ENCODE measurements at regions of chr22 and their contacts with region 1.

Region 1: GRCh38 chr22:49815641-49816071 is 12.0 kb downstream of the BRD1 start:
- DNase-seq: peak; percentile 73 to 86
- H3K4me3 ChIP-seq: no peak overlapping the region
- H3K27ac ChIP-seq: no peak overlapping the region
- H3K4me1 ChIP-seq: peaks cover 3% of the 10 kb centered on the region; the same call in 1 of the 2 replicates
- H3K27me3 ChIP-seq: no peaks in the 10 kb centered on the region
- CTCF ChIP-seq: no peak

Region 2: DNA sequence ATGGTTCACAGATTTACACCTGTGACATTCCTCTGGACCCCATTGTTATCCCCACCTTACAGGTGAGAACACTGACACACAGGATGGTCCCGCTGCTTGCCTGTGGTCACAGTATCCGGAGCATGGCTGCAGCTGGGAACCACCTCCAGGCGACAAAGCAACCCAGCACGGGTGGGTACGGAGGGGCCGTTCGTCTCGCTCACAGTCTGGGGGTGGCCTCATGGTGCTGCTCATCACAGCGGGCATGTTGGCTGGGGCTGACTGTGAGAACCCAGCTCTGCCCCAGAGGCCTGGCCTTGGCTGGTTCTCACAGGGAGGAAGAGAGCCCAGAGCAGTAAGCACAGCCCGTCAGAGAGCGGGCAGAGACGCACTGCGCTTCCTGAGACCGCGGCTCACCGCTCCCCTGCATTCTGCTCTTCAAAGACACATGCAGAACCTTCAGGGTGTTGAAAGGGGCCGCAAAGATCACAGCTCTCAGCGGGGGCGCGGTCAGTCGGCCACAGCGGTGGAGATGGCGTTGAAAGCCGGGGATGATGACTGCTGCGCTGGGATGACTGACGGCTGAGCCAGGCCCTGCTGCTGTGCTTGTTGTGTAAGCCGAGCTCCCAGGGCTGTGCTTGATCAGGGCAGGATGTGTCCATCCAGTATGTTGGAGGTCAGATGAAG is 410.9 kb before region 1 on chr22:
- CTCF ChIA-PET with region 1: no interaction called
- POLR2A ChIA-PET with region 1: no interaction called
- intact Hi-C with region 1: no loop called
- DNase-seq: no peak
- H3K4me3 ChIP-seq: no peak overlapping the region
- H3K27ac ChIP-seq: no peak overlapping the region
- H3K4me1 ChIP-seq: no peaks in the 10 kb centered on the region
- H3K27me3 ChIP-seq: peaks cover 100% of the 10 kb centered on the region
- CTCF ChIP-seq: no peak

Region 3: DNA sequence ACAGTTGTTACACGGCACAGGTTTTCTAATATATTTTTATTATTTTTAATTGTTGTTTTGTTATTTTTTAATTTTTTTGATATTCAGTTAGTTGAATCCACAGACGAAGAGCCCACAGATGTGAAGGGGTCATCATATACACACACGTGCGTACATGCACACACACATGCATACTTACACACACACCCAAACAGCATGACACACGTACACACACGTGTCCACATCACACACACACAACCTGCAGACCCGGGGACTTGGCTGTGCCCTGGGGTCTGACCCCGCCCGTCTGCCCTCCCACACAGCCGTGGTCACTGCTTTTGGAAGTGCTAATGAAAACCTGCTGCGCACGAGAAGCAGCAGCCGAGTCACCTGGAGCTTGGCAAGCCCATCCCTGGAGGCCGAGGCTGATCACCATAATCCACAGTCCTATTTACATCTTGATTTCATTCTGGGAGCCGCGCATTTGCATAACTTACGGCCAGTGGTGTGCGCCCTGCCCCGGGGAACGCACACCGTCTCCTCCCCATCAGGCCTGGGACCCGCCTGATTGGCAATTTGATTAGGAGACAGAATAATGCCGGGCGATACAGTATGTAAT is 98.2 kb before region 1 on chr22:
- CTCF ChIA-PET with region 1: no interaction called
- POLR2A ChIA-PET with region 1: no interaction called
- intact Hi-C with region 1: no loop called
- DNase-seq: no peak
- H3K4me3 ChIP-seq: no peak overlapping the region
- H3K27ac ChIP-seq: no peak overlapping the region
- H3K4me1 ChIP-seq: no peaks in the 10 kb centered on the region
- H3K27me3 ChIP-seq: peaks cover 100% of the 10 kb centered on the region
- CTCF ChIP-seq: no peak

Region 4: DNA sequence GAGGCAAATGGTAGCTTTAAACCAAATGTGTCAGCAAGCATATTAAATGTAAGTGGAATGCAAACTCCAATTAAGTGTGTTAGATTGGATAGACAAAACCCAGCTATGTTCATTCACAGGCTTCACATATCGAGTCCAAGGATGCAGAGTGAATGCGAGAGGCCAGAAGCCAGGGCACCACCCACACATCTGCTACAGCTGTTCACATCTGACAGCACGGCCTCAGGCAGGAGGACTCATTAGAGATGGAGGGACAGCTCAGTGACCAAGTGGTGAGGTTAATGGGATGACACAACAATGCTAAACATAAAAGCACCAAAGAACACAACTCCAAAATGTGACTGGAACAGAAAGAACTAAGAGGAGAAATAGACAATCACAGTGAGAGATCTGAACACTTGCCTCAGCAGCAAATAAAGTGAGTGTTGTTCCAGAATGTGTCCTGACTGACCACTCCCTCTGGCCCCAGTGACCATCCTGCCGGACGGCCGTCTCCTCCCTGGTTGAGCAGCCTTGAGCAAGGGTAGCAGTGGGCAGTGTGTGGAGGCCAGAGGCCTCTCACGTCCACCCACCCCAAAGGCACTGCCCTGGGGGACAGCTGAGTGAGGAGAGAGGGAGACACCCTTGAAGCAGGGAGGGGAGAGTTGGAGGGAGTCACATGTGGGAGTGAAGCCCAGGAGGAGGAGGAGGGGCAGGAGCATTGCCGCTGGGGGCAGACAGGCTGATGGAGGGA is 78.8 kb after region 1 on chr22:
- CTCF ChIA-PET with region 1: no interaction called
- POLR2A ChIA-PET with region 1: no interaction called
- intact Hi-C with region 1: loop called (anchors 10 kb)
- DNase-seq: no peak
- H3K4me3 ChIP-seq: no peak overlapping the region
- H3K27ac ChIP-seq: no peak overlapping the region
- H3K4me1 ChIP-seq: no peaks in the 10 kb centered on the region
- H3K27me3 ChIP-seq: no peaks in the 10 kb centered on the region
- CTCF ChIP-seq: no peak